ENCODE measurements at regions of chr7 and their contacts with region 1.

Region 1: GRCh38 chr7:30091491-30091912 is 43.3 kb upstream of the MTURN start:
- DNase-seq: no peak
- ATAC-seq: no peak
- H3K4me3 Mint-ChIP-seq: no peak overlapping the region
- H3K27ac Mint-ChIP-seq: 0 out of 2 replicates have a peak overlapping the region, but pooled peaks have one; percentile 14
- H3K4me1 Mint-ChIP-seq: peaks cover 4% of the 10 kb centered on the region
- H3K27me3 Mint-ChIP-seq: no peaks in the 10 kb centered on the region
- CTCF ChIP-seq: no peak

Region 2: DNA sequence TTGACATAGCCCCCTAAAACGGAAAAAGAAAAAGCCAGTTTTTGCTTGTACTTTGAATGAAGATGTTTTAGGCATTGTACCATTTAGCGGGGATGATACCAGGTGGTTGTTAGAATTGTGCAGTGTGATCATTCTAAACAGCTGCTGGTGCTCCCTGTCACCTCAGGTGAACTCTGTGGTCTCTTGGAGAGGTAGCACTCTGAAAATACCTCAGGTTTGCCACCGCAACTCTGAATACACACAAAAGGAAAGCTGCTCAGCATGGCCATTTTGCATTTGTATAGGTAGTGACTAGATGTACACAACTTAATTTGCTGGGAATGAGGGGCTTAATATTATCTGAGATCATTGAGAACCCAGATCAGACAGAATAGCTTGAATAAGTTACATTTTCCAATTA is 10.7 kb before region 1 on chr7:
- CTCF ChIA-PET with region 1: no interaction called
- POLR2A ChIA-PET with region 1: no interaction called
- DNase-seq: no peak
- ATAC-seq: peak; percentile 72
- H3K4me3 Mint-ChIP-seq: no peak overlapping the region
- H3K27ac Mint-ChIP-seq: no peak overlapping the region
- H3K4me1 Mint-ChIP-seq: peaks cover 20% of the 10 kb centered on the region
- H3K27me3 Mint-ChIP-seq: no peaks in the 10 kb centered on the region
- CTCF ChIP-seq: no peak

Region 3: DNA sequence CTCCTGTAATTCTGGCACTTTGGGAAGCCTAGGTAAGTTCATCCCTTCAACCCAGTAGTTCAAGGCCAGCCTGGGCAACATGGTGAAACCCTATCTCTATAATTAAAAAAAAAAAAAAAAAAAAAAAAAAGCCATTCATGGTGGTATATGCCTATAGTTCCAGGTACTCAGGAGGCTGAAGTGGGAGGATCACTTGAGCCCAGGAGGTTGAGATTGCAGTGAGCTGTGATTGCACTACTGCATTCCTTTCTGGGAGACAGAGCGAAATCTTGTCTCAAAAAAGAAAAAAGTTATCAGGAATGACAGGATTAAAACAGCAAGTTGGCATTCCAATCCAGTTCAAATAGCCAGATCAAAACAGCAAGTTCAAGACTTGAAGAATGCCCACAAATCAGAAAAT is 13.7 kb after region 1 on chr7:
- CTCF ChIA-PET with region 1: no interaction called
- POLR2A ChIA-PET with region 1: interaction called, 10 read pairs
- DNase-seq: no peak
- ATAC-seq: no peak
- H3K4me3 Mint-ChIP-seq: no peak overlapping the region
- H3K27ac Mint-ChIP-seq: no peak overlapping the region
- H3K4me1 Mint-ChIP-seq: no peaks in the 10 kb centered on the region
- H3K27me3 Mint-ChIP-seq: no peaks in the 10 kb centered on the region
- CTCF ChIP-seq: no peak

Region 4: GRCh38 chr7:30142710-30143109 is 51.2 kb after region 1 on chr7:
- CTCF ChIA-PET with region 1: no interaction called
- POLR2A ChIA-PET with region 1: no interaction called
- DNase-seq: no peak
- ATAC-seq: no peak
- H3K4me3 Mint-ChIP-seq: no peak overlapping the region
- H3K27ac Mint-ChIP-seq: no peak overlapping the region
- H3K4me1 Mint-ChIP-seq: 0 out of 2 replicates have a peak, but pooled peaks cover 3% of the 10 kb centered on the region
- H3K27me3 Mint-ChIP-seq: peaks cover 9% of the 10 kb centered on the region
- CTCF ChIP-seq: no peak

Measured in WTC11 (cell line).